Heart left ventricle (tissue), 16 donors: ENCODE measurements at regions of chr2 and their contacts with region 1.

Region 1: GRCh38 chr2:127324635-127325034 is 30.7 kb upstream of the ERCC3 start:
- DNase-seq: no peak
- ATAC-seq: peak in 1 of 4 donors; percentile 47
- H3K4me3 ChIP-seq: no peak overlapping the region
- H3K27ac ChIP-seq: no peak overlapping the region
- H3K4me1 ChIP-seq: no peaks in the 10 kb centered on the region
- H3K27me3 ChIP-seq: no peaks in the 10 kb centered on the region
- CTCF ChIP-seq: peak; percentile 28 to 69 (median 58)
- POLR2A ChIP-seq: no peak

Region 2: GRCh38 chr2:126797622-126798275 is 526.9 kb before region 1 on chr2:
- intact Hi-C with region 1: no loop called
- DNase-seq: peak in 1 of 5 donors; percentile 3
- ATAC-seq: peak in 1 of 4 donors; percentile 27
- H3K4me3 ChIP-seq: no peak overlapping the region
- H3K27ac ChIP-seq: no peak overlapping the region
- H3K4me1 ChIP-seq: no peaks in the 10 kb centered on the region
- H3K27me3 ChIP-seq: peaks cover 0 to 15% (median 0%) of the 10 kb centered on the region in 9 donors
- CTCF ChIP-seq: no peak
- POLR2A ChIP-seq: no peak

Region 3: DNA sequence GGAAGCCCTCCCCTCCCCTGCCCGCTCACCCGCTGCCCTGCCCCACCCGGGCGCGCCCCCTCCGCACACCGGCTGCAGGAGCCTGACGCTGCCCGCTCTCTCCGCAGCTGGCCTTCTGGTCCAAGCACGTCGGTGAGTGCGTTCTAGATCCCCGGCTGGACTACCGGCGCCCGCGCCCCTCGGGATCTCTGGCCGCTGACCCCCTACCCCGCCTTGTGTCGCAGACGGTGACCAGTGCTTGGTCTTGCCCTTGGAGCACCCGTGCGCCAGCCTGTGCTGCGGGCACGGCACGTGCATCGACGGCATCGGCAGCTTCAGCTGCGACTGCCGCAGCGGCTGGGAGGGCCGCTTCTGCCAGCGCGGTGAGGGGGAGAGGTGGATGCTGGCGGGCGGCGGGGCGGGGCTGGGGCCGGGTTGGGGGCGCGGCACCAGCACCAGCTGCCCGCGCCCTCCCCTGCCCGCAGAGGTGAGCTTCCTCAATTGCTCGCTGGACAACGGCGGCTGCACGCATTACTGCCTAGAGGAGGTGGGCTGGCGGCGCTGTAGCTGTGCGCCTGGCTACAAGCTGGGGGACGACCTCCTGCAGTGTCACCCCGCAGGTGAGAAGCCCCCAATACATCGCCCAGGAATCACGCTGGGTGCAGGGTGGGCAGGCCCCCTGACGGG is 98.3 kb after region 1 on chr2:
- intact Hi-C with region 1: loop called in 2 of 10 experiments (anchors 5 to 10 kb)
- DNase-seq: no peak
- ATAC-seq: peak in 1 of 4 donors; percentile 27
- H3K4me3 ChIP-seq: peak overlapping the region in 9 of 12 donors; percentile 9 to 42 (median 29)
- H3K27ac ChIP-seq: no peak overlapping the region
- H3K4me1 ChIP-seq: peaks cover 0 to 17% (median 8%) of the 10 kb centered on the region in 12 donors
- H3K27me3 ChIP-seq: peaks cover 11 to 37% (median 27%) of the 10 kb centered on the region in 9 donors
- CTCF ChIP-seq: no peak
- POLR2A ChIP-seq: no peak

Region 4: DNA sequence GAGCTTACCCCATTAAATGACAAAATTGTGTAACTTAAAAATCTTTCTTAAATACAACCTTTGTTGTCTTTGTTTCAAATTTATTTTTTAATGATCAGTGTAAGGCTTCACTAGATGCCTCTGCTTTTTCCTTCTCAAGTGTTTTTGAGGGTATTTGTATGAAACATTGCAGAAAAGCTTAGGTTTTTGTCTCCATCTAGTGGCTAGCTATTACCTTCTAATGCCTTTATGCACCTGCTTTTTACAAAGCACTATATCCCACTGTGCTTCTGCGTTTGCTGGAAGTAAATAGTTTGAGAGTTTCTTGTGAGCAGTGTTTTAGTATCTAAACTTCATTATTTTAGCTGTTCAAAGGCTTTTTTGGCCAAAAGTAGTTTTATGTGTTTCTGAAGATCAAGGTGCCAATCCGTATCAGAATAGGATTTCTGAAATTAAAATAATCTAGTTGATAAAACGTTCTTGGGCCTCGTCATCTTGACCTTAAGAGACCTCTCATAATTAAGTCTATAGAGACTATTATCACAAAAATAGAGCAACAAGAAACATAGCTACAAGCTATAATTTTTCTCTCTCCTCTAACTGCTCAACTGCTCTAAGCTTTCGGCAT is 154.7 kb after region 1 on chr2:
- intact Hi-C with region 1: loop called (anchors 2 to 5 kb)
- DNase-seq: no peak
- ATAC-seq: peak in 3 of 4 donors; percentile 34 to 74 (median 55)
- H3K4me3 ChIP-seq: no peak overlapping the region
- H3K27ac ChIP-seq: no peak overlapping the region
- H3K4me1 ChIP-seq: no peaks in the 10 kb centered on the region
- H3K27me3 ChIP-seq: no peaks in the 10 kb centered on the region
- CTCF ChIP-seq: peak; percentile 35 to 73 (median 62)
- POLR2A ChIP-seq: no peak